ENCODE measurements at regions of chr14 and their contacts with region 1.

Region 1: DNA sequence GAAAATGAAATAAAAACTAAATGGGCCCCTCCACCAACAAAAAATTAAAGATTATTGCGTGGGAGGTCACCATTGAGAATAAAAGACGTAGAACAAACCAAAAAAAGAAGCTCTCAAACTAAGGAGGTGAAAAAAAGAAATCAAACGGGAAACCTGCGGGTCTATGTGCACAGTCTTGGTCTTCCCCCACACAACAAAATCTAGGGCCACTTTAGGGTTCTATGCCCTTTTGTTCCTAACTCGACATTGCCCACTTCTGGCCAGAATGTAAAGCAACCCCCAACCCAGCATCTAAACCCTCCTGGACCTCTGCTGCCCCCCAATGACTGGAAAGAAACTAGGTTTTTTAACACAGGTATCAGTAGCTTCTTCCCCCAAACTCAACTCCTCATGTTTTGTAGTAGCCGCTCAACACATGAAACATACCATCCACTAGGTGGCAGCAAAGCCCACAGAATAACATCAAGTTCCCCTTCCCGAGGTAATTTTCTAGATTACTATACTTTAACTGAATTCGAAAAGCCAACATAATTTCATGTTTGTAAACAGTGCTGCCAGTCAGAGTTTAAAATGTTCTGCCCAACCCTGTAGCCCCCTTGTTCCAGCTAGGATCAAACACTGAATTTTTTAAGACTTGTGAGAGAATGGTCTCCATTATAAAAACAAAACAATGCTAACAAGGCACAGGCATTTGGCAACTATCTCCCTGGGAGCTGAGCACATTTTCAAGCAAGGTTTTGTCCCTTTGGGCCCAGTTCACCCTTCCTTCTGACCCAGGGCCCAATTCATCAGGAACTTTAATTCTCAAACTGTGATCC is 18.7 kb downstream of the DAD1 start:
- DNase-seq: peak; percentile 91
- ATAC-seq: peak; percentile 81
- H3K4me3 Mint-ChIP-seq: peak overlapping the region; percentile 86
- H3K27ac Mint-ChIP-seq: peak overlapping the region; percentile 94
- H3K4me1 Mint-ChIP-seq: peaks cover 60% of the 10 kb centered on the region
- H3K27me3 Mint-ChIP-seq: no peaks in the 10 kb centered on the region
- CTCF ChIP-seq: peak; percentile 91

Region 2: GRCh38 chr14:21917699-21918436 is 652.5 kb before region 1 on chr14:
- CTCF ChIA-PET with region 1: interaction called, 42 read pairs
- POLR2A ChIA-PET with region 1: interaction called, 6 read pairs
- intact Hi-C with region 1: loop called (anchors 5 kb)
- DNase-seq: peak; percentile 81
- ATAC-seq: peak; percentile 58
- H3K4me3 Mint-ChIP-seq: peak overlapping the region; percentile 79
- H3K27ac Mint-ChIP-seq: peak overlapping the region; percentile 85
- H3K4me1 Mint-ChIP-seq: peaks cover 52% of the 10 kb centered on the region
- H3K27me3 Mint-ChIP-seq: no peaks in the 10 kb centered on the region
- CTCF ChIP-seq: peak; percentile 58

Region 3: GRCh38 chr14:22164635-22165034 is 405.7 kb before region 1 on chr14:
- CTCF ChIA-PET with region 1: interaction called, 13 read pairs
- POLR2A ChIA-PET with region 1: no interaction called
- intact Hi-C with region 1: no loop called
- DNase-seq: no peak
- ATAC-seq: no peak
- H3K4me3 Mint-ChIP-seq: no peak overlapping the region
- H3K27ac Mint-ChIP-seq: no peak overlapping the region
- H3K4me1 Mint-ChIP-seq: peaks cover 8% of the 10 kb centered on the region
- H3K27me3 Mint-ChIP-seq: no peaks in the 10 kb centered on the region
- CTCF ChIP-seq: no peak

Region 4: DNA sequence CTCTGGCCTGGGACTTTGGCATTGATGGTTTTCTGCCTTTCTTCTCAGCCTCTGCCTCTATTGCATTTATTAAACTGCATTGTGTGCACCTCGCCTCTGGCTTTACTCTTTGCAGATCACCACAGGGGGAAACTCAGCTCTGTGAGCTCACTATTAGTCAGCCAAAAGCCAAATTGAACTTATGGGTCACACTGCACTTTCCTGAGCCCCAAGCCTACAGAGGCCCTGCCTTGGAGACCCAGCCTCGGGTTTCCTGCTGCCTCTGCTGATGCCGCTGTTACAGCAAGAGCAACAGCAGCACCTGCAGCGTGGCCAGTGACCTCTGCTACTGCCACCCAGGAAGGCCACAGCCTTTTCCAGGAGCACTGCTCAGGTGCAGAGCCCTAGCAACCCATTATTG is 103.8 kb before region 1 on chr14:
- CTCF ChIA-PET with region 1: no interaction called
- POLR2A ChIA-PET with region 1: no interaction called
- intact Hi-C with region 1: no loop called
- DNase-seq: no peak
- ATAC-seq: no peak
- H3K4me3 Mint-ChIP-seq: no peak overlapping the region
- H3K27ac Mint-ChIP-seq: no peak overlapping the region
- H3K4me1 Mint-ChIP-seq: no peaks in the 10 kb centered on the region
- H3K27me3 Mint-ChIP-seq: no peaks in the 10 kb centered on the region
- CTCF ChIP-seq: no peak

Region 5: DNA sequence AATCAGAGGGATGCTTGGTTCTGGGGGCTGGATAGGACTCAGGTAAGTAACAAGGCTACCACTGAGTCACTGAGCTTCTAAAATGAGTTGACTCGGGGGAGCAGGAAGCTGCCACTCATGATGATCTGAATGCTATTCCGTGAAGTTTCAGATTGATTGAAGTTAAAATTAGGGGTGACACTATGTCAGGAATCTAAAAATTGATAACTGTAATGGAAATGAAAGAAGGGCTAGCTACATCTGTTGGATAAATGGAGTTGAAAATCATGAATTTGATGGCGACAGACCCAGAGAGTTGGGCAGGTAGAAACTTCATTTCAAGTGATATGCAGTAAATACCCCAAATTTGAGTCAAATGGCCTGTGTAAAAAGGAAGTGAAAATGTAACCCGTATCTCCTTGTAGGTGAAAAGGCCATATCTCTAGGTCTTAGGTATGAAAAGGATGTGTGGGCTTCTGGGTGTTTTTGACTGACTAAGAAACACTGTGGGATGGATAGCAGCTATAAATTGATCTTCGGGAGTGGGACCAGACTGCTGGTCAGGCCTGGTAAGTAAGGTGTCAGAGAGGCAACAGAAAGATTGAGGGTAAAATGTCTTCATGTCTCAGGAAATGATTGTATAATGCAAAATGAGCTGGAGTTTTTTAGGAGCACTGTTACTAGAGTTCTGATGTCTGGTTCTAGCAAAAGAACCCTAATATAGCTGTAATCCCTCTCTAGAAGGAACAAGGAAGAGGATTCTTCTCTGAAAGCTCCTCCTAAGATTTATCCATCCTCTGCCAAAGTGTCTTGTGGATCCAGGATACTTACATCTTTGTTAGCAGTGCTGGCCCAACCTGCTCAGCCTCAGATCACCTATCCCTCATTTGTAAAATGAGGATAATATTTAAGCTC is 38.6 kb before region 1 on chr14:
- CTCF ChIA-PET with region 1: interaction called, 44 read pairs
- POLR2A ChIA-PET with region 1: interaction called, 200 read pairs
- intact Hi-C with region 1: no loop called
- DNase-seq: peak; percentile 66
- ATAC-seq: peak; percentile 71
- H3K4me3 Mint-ChIP-seq: peak overlapping the region; percentile 79
- H3K27ac Mint-ChIP-seq: peak overlapping the region; percentile 94
- H3K4me1 Mint-ChIP-seq: peaks cover 77% of the 10 kb centered on the region
- H3K27me3 Mint-ChIP-seq: no peaks in the 10 kb centered on the region
- CTCF ChIP-seq: no peak

Region 6: GRCh38 chr14:22598099-22598899 is 28.0 kb after region 1 on chr14 and contains the start of gene ABHD4:
- CTCF ChIA-PET with region 1: interaction called, 163 read pairs
- POLR2A ChIA-PET with region 1: interaction called, 4 read pairs
- intact Hi-C with region 1: no loop called
- DNase-seq: peak; percentile 76
- ATAC-seq: peak; percentile 89
- H3K4me3 Mint-ChIP-seq: peak within 1 kb of the TSS; percentile 92
- H3K27ac Mint-ChIP-seq: peak within 1 kb of the TSS; percentile 82
- H3K4me1 Mint-ChIP-seq: peaks cover 26% of the 10 kb centered on the region
- H3K27me3 Mint-ChIP-seq: no peaks in the 10 kb centered on the region
- CTCF ChIP-seq: no peak
- total RNA-seq, gene ABHD4: 8.6 to 9.4 TPM

Region 7: DNA sequence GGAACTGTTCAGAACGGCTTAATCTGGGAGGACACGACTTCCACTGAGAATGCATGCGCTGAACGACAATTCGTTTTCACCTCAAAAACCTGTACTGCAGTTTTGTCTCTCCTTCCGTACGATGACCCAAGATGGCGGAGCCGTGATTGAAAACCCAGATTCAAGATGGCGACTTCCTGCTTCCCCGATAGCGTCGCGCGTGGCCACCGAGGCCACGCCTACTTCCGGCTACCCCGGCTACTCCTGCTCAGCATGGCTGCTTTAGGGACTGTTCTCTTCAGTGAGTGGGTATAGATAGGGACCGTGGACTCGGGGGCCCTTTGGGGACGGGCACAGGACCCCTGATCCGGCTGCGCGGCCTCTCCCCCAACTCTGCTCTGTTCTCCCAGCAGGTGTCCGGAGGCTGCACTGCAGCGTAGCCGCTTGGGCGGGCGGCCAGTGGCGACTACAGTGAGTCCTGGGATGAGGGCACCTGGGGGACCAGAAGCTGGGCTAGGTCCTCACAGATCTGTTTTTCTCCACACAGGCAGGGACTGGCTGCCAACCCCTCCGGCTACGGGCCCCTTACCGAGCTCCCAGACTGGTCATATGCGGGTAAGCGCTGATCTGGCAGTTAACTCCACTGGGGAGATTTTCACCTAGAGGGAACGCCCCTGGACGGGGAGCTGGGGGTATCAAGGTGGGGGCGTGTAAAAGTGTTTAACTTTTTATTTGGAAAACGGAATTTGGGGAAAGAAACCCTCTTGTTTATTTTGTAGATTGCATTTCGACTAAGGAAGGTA is 259.5 kb after region 1 on chr14 and contains the start of gene MRPL52:
- CTCF ChIA-PET with region 1: interaction called, 30 read pairs
- POLR2A ChIA-PET with region 1: interaction called, 7 read pairs
- intact Hi-C with region 1: loop called (anchors 10 kb)
- DNase-seq: peak; percentile 94
- ATAC-seq: peak; percentile 93
- H3K4me3 Mint-ChIP-seq: peak within 1 kb of the TSS; percentile 88
- H3K27ac Mint-ChIP-seq: peak within 1 kb of the TSS; percentile 98
- H3K4me1 Mint-ChIP-seq: peaks cover 22% of the 10 kb centered on the region
- H3K27me3 Mint-ChIP-seq: peaks cover 2% of the 10 kb centered on the region
- CTCF ChIP-seq: no peak
- total RNA-seq, gene MRPL52: 122 to 126 TPM

Region 8: GRCh38 chr14:22918804-22919600 is 348.7 kb after region 1 on chr14 and contains the start of gene RBM23:
- CTCF ChIA-PET with region 1: interaction called, 17 read pairs
- POLR2A ChIA-PET with region 1: interaction called, 3 read pairs
- intact Hi-C with region 1: no loop called
- DNase-seq: peak; percentile 100
- ATAC-seq: peak; percentile 95
- H3K4me3 Mint-ChIP-seq: peak within 1 kb of the TSS; percentile 89
- H3K27ac Mint-ChIP-seq: peak within 1 kb of the TSS; percentile 98
- H3K4me1 Mint-ChIP-seq: peaks cover 36% of the 10 kb centered on the region
- H3K27me3 Mint-ChIP-seq: no peaks in the 10 kb centered on the region
- CTCF ChIP-seq: no peak
- total RNA-seq, gene RBM23: 46.9 to 55.2 TPM

Region 9: GRCh38 chr14:22939684-22940083 is 369.3 kb after region 1 on chr14:
- CTCF ChIA-PET with region 1: no interaction called
- POLR2A ChIA-PET with region 1: no interaction called
- intact Hi-C with region 1: no loop called
- DNase-seq: no peak
- ATAC-seq: no peak
- H3K4me3 Mint-ChIP-seq: no peak overlapping the region
- H3K27ac Mint-ChIP-seq: no peak overlapping the region
- H3K4me1 Mint-ChIP-seq: no peaks in the 10 kb centered on the region
- H3K27me3 Mint-ChIP-seq: no peaks in the 10 kb centered on the region
- CTCF ChIP-seq: no peak

Measured in activated CD8-positive, alpha-beta T cell treated with anti-CD3 and anti-CD28 coated beads for 36 hours (primary cell).